ENCODE measurements at regions of chr11 and their contacts with region 1.

Region 1: DNA sequence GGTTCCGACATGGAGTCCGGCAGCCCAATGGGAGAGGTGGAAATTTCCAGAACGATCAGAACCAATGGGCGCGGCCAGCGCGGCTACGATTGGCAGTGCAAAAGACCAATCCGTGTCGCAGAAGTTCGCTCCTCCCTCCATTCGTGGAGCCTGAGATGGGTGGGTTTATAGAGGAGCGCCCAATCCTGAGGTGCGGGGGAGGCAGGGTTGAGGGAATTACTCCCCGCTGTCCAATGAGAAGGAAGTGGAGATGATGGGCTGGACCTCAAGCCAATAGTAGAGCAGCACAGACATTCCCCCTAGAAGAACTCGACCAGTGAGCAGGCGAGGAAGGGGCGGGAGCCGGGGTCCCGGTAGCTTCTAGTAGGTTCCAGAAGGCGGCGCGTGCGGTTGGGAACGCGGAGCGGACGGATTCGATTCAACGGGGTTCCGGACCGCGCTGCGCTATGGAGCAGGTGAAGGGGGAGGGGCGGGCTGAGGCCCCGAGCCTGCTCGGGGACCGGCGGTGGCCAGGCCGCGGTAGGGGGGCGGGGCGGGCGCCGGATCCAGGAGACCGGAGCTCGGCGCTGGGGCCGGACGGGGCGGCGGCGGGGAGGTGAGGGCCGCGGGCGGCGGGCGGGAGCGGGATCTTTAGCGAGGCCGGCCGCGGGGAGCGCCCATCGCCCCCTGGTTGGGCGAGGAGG is at the start of gene STIP1:
- DNase-seq: peak; percentile 93
- ATAC-seq: peak; percentile 87
- H3K4me3 Mint-ChIP-seq: no peak within 1 kb of the TSS
- H3K27ac Mint-ChIP-seq: peak within 1 kb of the TSS; percentile 97
- H3K4me1 Mint-ChIP-seq: peaks cover 27% of the 10 kb centered on the region
- H3K27me3 Mint-ChIP-seq: no peaks in the 10 kb centered on the region
- CTCF ChIP-seq: no peak
- total RNA-seq, gene STIP1: 155 and 159 TPM in 2 replicates

Region 2: DNA sequence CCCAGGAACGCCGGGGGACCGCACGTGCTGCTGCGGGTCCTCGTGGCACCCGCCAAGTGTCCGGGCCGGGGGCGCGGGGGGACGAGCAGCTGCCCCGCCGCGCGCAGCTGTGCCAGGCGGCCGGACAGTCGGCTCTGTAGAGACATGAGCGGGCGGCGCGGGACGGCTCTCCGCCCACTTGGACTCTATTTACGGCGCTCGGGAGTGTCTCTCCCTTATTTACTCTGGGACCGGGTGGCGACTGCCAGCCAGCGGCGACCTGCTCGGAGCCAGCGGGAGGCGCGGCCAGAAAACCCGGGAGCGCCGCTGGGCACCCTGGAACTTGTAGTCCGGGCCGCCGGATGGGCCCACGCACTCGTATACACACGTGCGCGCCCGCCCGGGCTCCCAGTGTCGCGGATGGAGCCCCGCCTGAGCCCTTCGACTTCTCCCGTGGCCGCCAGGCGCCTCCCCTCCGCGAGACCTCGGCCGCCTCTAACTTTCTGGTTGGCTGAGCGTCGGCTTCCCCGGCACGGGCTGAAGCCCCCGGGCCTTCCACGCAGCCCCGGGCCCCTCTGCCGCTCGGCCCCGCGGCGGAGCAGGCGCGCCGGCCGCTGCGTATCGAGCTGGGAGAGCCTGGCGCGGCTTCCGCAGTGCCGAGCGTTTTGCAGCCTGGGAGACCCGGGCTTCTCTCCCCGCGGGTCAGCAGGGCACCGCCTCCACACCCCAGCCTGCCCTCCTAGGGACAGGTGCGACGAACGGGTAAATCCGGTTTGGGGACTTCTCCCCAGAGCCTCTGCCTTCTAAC is 19.9 kb before region 1 on chr11 and contains the start of gene MACROD1:
- CTCF ChIA-PET with region 1: no interaction called
- POLR2A ChIA-PET with region 1: interaction called, 28 read pairs
- intact Hi-C with region 1: loop called (anchors 2 kb)
- DNase-seq: peak; percentile 67
- ATAC-seq: peak; percentile 89
- H3K4me3 Mint-ChIP-seq: peak within 1 kb of the TSS; percentile 87
- H3K27ac Mint-ChIP-seq: peak within 1 kb of the TSS; percentile 61
- H3K4me1 Mint-ChIP-seq: peaks cover 11% of the 10 kb centered on the region
- H3K27me3 Mint-ChIP-seq: no peaks in the 10 kb centered on the region
- CTCF ChIP-seq: no peak
- total RNA-seq, gene MACROD1: 4.5 and 5.5 TPM in 2 replicates

Region 3: GRCh38 chr11:64198511-64198910 is 12.6 kb after region 1 on chr11:
- CTCF ChIA-PET with region 1: no interaction called
- POLR2A ChIA-PET with region 1: interaction called, 12 read pairs
- intact Hi-C with region 1: no loop called
- DNase-seq: no peak
- ATAC-seq: no peak
- H3K4me3 Mint-ChIP-seq: no peak overlapping the region
- H3K27ac Mint-ChIP-seq: no peak overlapping the region
- H3K4me1 Mint-ChIP-seq: no peaks in the 10 kb centered on the region
- H3K27me3 Mint-ChIP-seq: no peaks in the 10 kb centered on the region
- CTCF ChIP-seq: no peak

Region 4: GRCh38 chr11:64225612-64226506 is 39.9 kb after region 1 on chr11 and contains the starts of genes NUDT22 and TRPT1:
- CTCF ChIA-PET with region 1: no interaction called
- POLR2A ChIA-PET with region 1: interaction called, 23 read pairs
- intact Hi-C with region 1: loop called (anchors 1 kb)
- DNase-seq: peak; percentile 95
- ATAC-seq: peak; percentile 56
- H3K4me3 Mint-ChIP-seq: peak within 1 kb of the TSS; percentile 87
- H3K27ac Mint-ChIP-seq: peak within 1 kb of the TSS; percentile 81
- H3K4me1 Mint-ChIP-seq: peaks cover 39% of the 10 kb centered on the region
- H3K27me3 Mint-ChIP-seq: no peaks in the 10 kb centered on the region
- CTCF ChIP-seq: no peak
- total RNA-seq, gene NUDT22: 81.0 and 95.3 TPM in 2 replicates
- total RNA-seq, gene TRPT1: 50.6 and 51.3 TPM in 2 replicates

Region 5: DNA sequence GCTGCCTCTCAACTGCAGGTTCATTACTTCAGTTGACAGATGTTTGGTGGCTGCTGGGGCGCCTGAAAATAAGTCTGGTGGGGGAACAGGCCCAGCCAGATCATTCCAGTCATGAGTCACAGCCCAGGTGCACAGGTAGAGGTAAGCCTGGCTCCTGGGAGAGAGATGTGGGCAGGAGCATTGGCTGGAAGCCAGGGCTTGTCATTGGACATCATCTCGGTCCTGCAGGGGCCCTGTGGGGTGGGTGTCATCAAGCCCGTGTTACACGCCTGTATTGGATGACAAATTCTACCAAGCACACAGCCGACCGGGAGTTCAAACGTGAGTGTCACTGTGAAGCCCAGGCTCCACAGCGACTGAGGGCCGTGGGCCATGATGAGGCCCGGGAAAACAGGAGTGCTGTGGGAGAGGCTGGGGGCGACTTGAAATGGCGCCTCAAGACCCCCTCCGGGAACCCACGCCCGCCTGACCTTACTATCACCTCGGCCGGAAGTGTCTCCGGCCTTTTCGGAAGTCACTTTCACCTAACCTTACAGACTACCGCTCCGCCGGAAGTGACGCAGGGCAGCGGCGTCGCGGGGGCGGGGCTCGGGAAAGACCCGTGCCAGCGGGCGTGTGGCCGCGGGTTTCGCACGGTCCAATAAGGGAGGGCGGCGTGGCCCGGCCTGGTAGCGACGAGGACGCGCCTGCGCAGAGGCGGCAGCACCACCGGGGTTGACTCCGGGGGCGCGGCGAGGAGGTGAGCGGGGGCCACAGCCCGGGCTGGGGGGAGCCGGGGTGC is 54.6 kb after region 1 on chr11 and contains the start of gene FKBP2:
- CTCF ChIA-PET with region 1: interaction called, 3 read pairs
- POLR2A ChIA-PET with region 1: interaction called, 16 read pairs
- intact Hi-C with region 1: loop called (anchors 2 kb)
- DNase-seq: peak; percentile 98
- ATAC-seq: peak; percentile 61
- H3K4me3 Mint-ChIP-seq: peak within 1 kb of the TSS; percentile 91
- H3K27ac Mint-ChIP-seq: peak within 1 kb of the TSS; percentile 98
- H3K4me1 Mint-ChIP-seq: peaks cover 75% of the 10 kb centered on the region
- H3K27me3 Mint-ChIP-seq: no peaks in the 10 kb centered on the region
- CTCF ChIP-seq: no peak
- total RNA-seq, gene FKBP2: 31.4 and 39.4 TPM in 2 replicates

Region 6: DNA sequence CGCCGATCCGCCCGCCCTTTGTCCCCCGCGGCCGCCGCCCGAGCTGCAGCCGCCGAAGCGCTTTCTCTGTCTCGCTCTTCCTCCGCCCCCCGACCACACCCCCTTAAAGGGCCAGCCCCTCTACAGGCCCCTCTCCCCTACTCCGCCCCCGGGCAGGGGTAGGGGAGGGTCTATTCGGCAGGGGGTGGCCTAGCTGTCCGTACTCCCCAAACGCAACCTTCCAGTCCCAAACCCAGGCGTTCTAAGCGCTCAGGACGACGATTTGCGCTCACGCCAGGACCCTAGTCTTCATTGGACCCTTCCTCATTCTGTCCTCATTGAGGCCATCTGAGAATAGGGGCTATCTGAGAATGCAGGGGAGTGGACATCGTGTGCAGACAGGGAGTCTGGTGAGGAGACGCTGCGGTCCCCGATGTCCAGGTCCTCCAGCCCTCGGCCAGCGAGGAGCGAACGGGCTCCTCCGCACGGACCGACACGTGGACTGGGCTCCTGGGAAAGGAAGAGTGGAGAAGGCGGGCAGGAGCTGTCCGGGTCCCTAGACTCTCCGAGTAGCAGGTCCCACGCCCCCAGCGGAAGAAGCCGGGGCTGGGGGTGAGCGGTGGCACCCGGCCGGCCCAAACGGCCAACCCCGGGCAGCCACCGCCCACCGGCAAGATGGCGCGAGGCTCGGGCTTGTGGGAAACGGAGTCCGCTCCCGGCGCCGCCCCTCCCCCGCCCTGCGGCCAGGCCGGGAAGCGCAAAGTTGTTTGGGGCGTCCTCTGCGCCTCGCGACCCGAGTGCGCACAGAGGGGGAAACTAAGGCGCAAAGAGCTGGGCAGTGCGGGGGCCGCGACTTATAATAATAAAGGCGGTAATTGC is 61.1 kb after region 1 on chr11 and contains the start of gene PPP1R14B:
- CTCF ChIA-PET with region 1: interaction called, 3 read pairs
- POLR2A ChIA-PET with region 1: interaction called, 16 read pairs
- intact Hi-C with region 1: no loop called
- DNase-seq: peak; percentile 78
- ATAC-seq: peak; percentile 63
- H3K4me3 Mint-ChIP-seq: peak within 1 kb of the TSS; percentile 90
- H3K27ac Mint-ChIP-seq: peak within 1 kb of the TSS; percentile 87
- H3K4me1 Mint-ChIP-seq: peaks cover 43% of the 10 kb centered on the region
- H3K27me3 Mint-ChIP-seq: no peaks in the 10 kb centered on the region
- CTCF ChIP-seq: no peak
- total RNA-seq, gene PPP1R14B: 112 and 127 TPM in 2 replicates

Region 7: GRCh38 chr11:64284048-64284961 is 98.3 kb after region 1 on chr11 and contains the start of gene BAD:
- CTCF ChIA-PET with region 1: no interaction called
- POLR2A ChIA-PET with region 1: interaction called, 16 read pairs
- intact Hi-C with region 1: no loop called
- DNase-seq: peak; percentile 80
- ATAC-seq: peak; percentile 79
- H3K4me3 Mint-ChIP-seq: peak within 1 kb of the TSS; percentile 90
- H3K27ac Mint-ChIP-seq: peak within 1 kb of the TSS; percentile 92
- H3K4me1 Mint-ChIP-seq: peaks cover 20% of the 10 kb centered on the region
- H3K27me3 Mint-ChIP-seq: no peaks in the 10 kb centered on the region
- CTCF ChIP-seq: no peak
- total RNA-seq, gene BAD: 21.7 and 26.6 TPM in 2 replicates

Region 8: GRCh38 chr11:64723117-64723906 is 537.4 kb after region 1 on chr11 and contains the start of gene NRXN2:
- CTCF ChIA-PET with region 1: no interaction called
- POLR2A ChIA-PET with region 1: no interaction called
- intact Hi-C with region 1: no loop called
- DNase-seq: peak; percentile 88
- ATAC-seq: peak; percentile 89
- H3K4me3 Mint-ChIP-seq: peak within 1 kb of the TSS; percentile 81
- H3K27ac Mint-ChIP-seq: peak within 1 kb of the TSS; percentile 76
- H3K4me1 Mint-ChIP-seq: peaks cover 22% of the 10 kb centered on the region
- H3K27me3 Mint-ChIP-seq: peaks cover 30% of the 10 kb centered on the region
- CTCF ChIP-seq: peak; percentile 64
- total RNA-seq, gene NRXN2: 0.54 and 0.73 TPM in 2 replicates

Measured in activated B cell treated with CpG ODN at 0.5 μM for 24 hours (primary cell).